ENCODE measurements at regions of chr3 and their contacts with region 1.

Region 1: DNA sequence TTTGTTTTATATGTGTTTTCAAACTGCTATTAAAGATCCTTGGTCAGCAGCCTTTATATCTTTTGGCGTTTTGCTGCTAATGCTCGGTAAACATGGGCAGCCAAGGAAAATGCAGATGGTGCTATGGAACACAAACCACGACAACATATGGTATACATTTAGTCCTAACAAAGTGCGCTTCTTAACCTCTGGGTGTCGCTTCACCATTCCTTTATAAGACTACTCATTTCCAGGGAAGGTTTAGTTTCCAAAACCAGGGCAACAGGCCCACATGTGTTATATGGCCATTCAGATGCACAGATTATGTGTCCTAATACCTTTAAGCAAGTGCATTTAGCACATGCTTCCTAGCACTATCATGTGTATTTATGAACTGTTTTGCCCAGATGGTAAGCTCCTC is 14.7 kb downstream of the SHOX2 start:
- DNase-seq: no peak
- ATAC-seq: no peak
- H3K4me3 ChIP-seq: no peak overlapping the region
- H3K4me3 Mint-ChIP-seq: no peak overlapping the region
- H3K27ac ChIP-seq: no peak overlapping the region
- H3K27ac Mint-ChIP-seq: no peak overlapping the region
- H3K4me1 ChIP-seq: no peaks in the 10 kb centered on the region
- H3K4me1 Mint-ChIP-seq: peaks cover 0 to 6% (median 0%) of the 10 kb centered on the region in 7 donors
- H3K27me3 ChIP-seq: peaks cover 8 to 24% of the 10 kb centered on the region in 2 donors
- H3K27me3 Mint-ChIP-seq: peaks cover 77 to 88% (median 84%) of the 10 kb centered on the region in 5 donors

Region 2: GRCh38 chr3:156547637-156548036 is 1543.9 kb before region 1 on chr3:
- CTCF ChIA-PET with region 1: no interaction called
- POLR2A ChIA-PET with region 1: no interaction called
- intact Hi-C with region 1: no loop called
- DNase-seq: no peak
- ATAC-seq: no peak
- H3K4me3 ChIP-seq: no peak overlapping the region
- H3K4me3 Mint-ChIP-seq: no peak overlapping the region
- H3K27ac ChIP-seq: no peak overlapping the region
- H3K27ac Mint-ChIP-seq: peak overlapping the region in 3 of 9 donors; percentile 13 to 61 (median 14)
- H3K4me1 ChIP-seq: peaks cover under 1 to 5% of the 10 kb centered on the region in 2 donors
- H3K4me1 Mint-ChIP-seq: peaks cover 22 to 67% (median 46%) of the 10 kb centered on the region in 7 donors
- H3K27me3 ChIP-seq: no peaks in the 10 kb centered on the region
- H3K27me3 Mint-ChIP-seq: no peaks in the 10 kb centered on the region

Region 3: DNA sequence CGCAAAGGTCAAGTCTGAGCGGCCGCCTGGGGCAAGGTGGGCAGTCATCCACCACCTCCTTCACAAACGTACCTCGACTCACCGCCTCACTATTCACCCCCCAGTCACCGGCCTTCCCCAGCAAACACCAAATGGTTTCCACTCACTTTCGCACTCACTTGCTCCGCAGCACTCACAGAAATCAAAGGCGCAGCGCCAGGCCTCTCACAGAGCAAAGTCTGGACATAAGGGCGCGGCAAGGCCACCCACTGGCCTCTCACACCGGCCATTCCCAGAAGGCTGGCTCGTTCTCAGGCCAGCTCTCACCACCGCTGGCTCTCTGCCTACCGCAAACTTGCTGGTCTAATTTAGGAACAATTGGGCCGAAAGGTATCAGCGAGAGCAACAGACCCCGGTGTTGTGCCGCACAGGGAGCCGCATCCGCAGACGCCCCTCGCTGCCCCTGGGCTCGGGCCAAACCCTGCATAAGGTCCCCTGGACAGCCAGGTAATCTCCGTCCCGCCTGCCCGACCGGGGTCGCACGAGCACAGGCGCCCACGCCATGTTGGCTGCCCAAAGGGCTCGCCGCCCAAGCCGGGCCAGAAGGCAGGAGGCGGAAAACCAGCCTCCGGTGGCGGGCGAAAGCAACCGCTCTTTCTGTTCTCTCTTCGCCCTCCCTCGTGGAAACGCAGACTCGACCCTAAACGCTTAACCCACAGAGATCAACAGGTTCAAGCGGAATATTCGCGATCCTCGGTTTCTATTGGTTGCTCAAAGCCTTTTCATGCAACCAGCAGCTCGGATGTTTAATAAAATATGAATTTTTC is 11.8 kb after region 1 on chr3:
- CTCF ChIA-PET with region 1: no interaction called
- POLR2A ChIA-PET with region 1: interaction called, 31 read pairs
- intact Hi-C with region 1: loop called in 1 of 2 experiments (anchors 1 kb)
- DNase-seq: peak in 3 of 9 donors; percentile 8 to 31 (median 29)
- ATAC-seq: no peak
- H3K4me3 ChIP-seq: peak overlapping the region; percentile 19
- H3K4me3 Mint-ChIP-seq: peak overlapping the region in 9 of 10 donors; percentile 34 to 82 (median 60)
- H3K27ac ChIP-seq: no peak overlapping the region
- H3K27ac Mint-ChIP-seq: peak overlapping the region in 7 of 9 donors; percentile 45 to 86 (median 75)
- H3K4me1 ChIP-seq: peaks cover 25 to 26% of the 10 kb centered on the region in 2 donors
- H3K4me1 Mint-ChIP-seq: peaks cover 37 to 64% (median 46%) of the 10 kb centered on the region in 7 donors
- H3K27me3 ChIP-seq: peaks cover 32 to 91% of the 10 kb centered on the region in 2 donors
- H3K27me3 Mint-ChIP-seq: peaks cover 91 to 99% (median 93%) of the 10 kb centered on the region in 5 donors

Region 4: DNA sequence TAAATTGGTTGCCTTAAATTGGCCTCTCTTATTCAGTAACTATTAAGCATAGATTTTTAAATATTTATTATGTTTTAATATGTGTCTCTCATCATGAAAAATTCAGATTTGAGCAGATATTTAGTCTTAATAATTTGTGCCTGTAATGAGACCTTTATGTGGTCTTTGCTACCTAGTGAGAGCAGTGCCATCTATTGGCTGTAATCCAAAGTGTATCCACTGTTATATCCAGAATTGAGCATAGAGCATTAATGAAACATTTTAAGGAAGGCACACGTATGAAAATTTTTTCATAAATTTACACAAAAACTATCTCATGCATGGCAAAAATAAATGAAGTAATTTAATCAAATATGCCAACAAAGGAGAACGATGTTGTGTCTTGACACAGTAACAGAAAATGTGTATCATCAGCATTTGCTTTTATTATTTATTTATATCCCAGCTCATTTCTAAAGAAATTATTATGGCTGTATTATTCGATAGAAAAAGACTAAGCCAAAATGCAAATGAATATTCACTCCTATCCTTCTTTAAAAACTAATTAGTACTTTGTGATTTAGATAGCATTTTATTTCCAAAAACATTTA is 221.9 kb after region 1 on chr3:
- CTCF ChIA-PET with region 1: no interaction called
- POLR2A ChIA-PET with region 1: no interaction called
- intact Hi-C with region 1: loop called in 1 of 2 experiments (anchors 1 kb)
- DNase-seq: peak in 1 of 9 donors; percentile 2
- ATAC-seq: peak; percentile 44
- H3K4me3 ChIP-seq: no peak overlapping the region
- H3K4me3 Mint-ChIP-seq: no peak overlapping the region
- H3K27ac ChIP-seq: no peak overlapping the region
- H3K27ac Mint-ChIP-seq: no peak overlapping the region
- H3K4me1 ChIP-seq: no peaks in the 10 kb centered on the region
- H3K4me1 Mint-ChIP-seq: no peaks in the 10 kb centered on the region
- H3K27me3 ChIP-seq: no peaks in the 10 kb centered on the region
- H3K27me3 Mint-ChIP-seq: no peaks in the 10 kb centered on the region

Region 5: DNA sequence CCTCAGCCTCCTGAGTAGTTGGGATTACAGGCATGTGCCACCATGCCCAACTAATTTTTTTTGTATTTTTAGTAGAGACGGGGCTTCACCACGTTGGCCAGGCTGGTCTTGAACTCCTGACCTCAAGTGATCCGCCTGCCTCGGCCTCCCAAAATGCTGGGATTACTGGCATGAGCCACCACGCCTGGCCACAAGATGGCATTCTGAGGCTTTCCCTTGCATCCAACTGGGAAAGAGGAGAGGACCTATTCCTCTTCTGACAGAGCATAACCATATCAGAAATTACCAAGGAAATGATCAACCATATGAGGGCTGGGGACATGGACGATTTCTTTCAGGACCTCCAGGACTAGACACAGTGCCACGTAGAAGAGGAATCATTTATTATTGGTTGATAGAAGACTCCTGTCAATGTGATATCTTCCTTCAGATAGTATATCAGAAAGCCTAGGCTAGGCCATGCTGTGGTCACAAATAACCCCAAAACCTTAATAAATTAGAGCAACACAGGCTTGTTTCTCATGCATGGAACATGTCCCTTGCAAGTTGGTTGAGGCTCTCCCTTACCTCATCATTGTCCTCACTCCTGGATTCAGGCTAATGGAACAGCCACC is 1524.8 kb after region 1 on chr3:
- CTCF ChIA-PET with region 1: no interaction called
- POLR2A ChIA-PET with region 1: no interaction called
- intact Hi-C with region 1: no loop called
- DNase-seq: no peak
- ATAC-seq: no peak
- H3K4me3 ChIP-seq: no peak overlapping the region
- H3K4me3 Mint-ChIP-seq: no peak overlapping the region
- H3K27ac ChIP-seq: no peak overlapping the region
- H3K27ac Mint-ChIP-seq: no peak overlapping the region
- H3K4me1 ChIP-seq: no peaks in the 10 kb centered on the region
- H3K4me1 Mint-ChIP-seq: no peaks in the 10 kb centered on the region
- H3K27me3 ChIP-seq: no peaks in the 10 kb centered on the region
- H3K27me3 Mint-ChIP-seq: peaks cover 0 to under 1% (median 0%) of the 10 kb centered on the region in 5 donors